Mammary epithelial cell (primary cell): ENCODE measurements at regions of chr17 and their contacts with region 1.

Region 1: DNA sequence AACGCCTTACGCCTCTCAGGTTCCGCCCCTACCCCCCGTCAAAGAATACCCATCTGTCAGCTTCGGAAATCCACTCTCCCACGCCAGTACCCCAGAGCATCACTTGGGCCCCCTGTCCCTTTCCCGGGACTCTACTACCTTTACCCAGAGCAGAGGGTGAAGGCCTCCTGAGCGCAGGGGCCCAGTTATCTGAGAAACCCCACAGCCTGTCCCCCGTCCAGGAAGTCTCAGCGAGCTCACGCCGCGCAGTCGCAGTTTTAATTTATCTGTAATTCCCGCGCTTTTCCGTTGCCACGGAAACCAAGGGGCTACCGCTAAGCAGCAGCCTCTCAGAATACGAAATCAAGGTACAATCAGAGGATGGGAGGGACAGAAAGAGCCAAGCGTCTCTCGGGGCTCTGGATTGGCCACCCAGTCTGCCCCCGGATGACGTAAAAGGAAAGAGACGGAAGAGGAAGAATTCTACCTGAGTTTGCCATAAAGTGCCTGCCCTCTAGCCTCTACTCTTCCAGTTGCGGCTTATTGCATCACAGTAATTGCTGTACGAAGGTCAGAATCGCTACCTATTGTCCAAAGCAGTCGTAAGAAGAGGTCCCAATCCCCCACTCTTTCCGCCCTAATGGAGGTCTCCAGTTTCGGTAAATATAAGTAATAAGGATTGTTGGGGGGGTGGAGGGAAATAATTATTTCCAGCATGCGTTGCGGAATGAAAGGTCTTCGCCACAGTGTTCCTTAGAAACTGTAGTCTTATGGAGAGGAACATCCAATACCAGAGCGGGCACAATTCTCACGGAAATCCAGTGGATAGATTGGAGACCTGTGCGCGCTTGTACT is at the start of gene BRCA1:
- DNase-seq: peak; percentile 99
- H3K4me3 ChIP-seq: peak within 1 kb of the TSS; percentile 78 to 89 (median 80)
- H3K27ac ChIP-seq: peak within 1 kb of the TSS; percentile 92
- H3K4me1 ChIP-seq: peaks cover 22% of the 10 kb centered on the region
- H3K27me3 ChIP-seq: no peaks in the 10 kb centered on the region
- CTCF ChIP-seq: no peak
- total RNA-seq, gene BRCA1: 5.5 to 35.8 TPM

Region 2: GRCh38 chr17:42843358-42843934 is 281.9 kb before region 1 on chr17:
- CTCF ChIA-PET with region 1: no interaction called
- dilution Hi-C with region 1: no loop called
- in situ Hi-C with region 1: no loop called
- intact Hi-C with region 1: loop called (anchors 5 kb)
- DNase-seq: peak; percentile 42
- H3K4me3 ChIP-seq: no peak overlapping the region
- H3K27ac ChIP-seq: no peak overlapping the region
- H3K4me1 ChIP-seq: peaks cover 6% of the 10 kb centered on the region
- H3K27me3 ChIP-seq: no peaks in the 10 kb centered on the region
- CTCF ChIP-seq: peak; percentile 98

Region 3: GRCh38 chr17:43024407-43025289 is 100.7 kb before region 1 on chr17 and contains the start of gene RND2:
- CTCF ChIA-PET with region 1: interaction called, 4 read pairs
- dilution Hi-C with region 1: no loop called
- in situ Hi-C with region 1: no loop called
- intact Hi-C with region 1: loop called (anchors 1 kb)
- DNase-seq: peak; percentile 84
- H3K4me3 ChIP-seq: peak within 1 kb of the TSS; percentile 50 to 60 (median 52)
- H3K27ac ChIP-seq: peak within 1 kb of the TSS; percentile 47
- H3K4me1 ChIP-seq: peaks cover 15% of the 10 kb centered on the region
- H3K27me3 ChIP-seq: no peaks in the 10 kb centered on the region
- CTCF ChIP-seq: peak; percentile 62 to 87
- total RNA-seq, gene RND2: 0.17 to 0.85 TPM